ENCODE measurements at regions of chr2 and their contacts with region 1.

Region 1: GRCh38 chr2:9693211-9693520 is 62.4 kb upstream of the YWHAQ start:
- DNase-seq: peak; percentile 93

Region 2: DNA sequence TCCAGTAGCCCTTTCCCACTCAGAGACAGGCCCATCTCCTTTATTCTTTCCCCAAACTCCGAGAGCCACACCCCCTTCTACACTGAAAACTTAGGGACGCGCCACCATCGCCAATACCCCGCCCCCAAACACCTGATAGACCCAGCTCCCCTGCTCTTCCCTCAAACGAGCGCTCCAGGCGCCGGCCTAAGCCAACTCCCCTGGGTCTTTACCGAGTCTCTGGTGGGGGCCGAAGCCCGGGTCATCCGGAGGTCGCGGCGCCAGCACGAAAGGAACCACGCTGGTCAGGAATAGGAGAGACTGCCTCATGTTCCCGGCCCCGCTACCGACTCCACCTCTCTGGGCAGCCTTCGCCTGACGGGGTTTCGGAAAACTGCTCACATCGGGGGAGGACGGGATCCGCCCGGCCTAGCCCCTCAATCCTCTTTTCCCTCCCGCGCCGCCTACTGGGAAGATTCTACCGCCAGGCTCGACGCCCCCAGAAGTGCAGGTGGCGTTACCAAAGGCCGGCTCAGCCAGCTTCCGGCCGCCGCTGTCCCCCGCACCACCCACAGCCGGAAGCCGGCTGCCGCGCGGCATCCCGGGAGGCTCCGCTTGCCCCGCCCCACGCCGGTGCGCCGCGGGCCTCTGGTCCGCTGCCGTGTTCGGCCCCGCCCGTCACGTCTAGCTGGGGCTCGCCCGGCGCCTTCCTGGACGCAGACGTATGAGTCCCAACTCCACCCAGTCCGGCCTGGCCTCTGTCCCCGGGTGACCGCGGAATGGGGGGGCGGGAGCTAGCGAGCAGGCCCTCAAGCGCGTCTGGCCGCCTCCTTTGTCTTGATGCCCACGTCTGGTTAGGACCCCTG is 137.6 kb before region 1 on chr2 and contains the start of gene ADAM17:
- intact Hi-C with region 1: loop called in 1 of 2 experiments (anchors 10 kb)
- DNase-seq: peak; percentile 100
- total RNA-seq, gene ADAM17: 24.8 to 34.9 TPM